Ascending aorta (tissue), 2 donors: ENCODE measurements at regions of chr4 and their contacts with region 1.

Region 1: DNA sequence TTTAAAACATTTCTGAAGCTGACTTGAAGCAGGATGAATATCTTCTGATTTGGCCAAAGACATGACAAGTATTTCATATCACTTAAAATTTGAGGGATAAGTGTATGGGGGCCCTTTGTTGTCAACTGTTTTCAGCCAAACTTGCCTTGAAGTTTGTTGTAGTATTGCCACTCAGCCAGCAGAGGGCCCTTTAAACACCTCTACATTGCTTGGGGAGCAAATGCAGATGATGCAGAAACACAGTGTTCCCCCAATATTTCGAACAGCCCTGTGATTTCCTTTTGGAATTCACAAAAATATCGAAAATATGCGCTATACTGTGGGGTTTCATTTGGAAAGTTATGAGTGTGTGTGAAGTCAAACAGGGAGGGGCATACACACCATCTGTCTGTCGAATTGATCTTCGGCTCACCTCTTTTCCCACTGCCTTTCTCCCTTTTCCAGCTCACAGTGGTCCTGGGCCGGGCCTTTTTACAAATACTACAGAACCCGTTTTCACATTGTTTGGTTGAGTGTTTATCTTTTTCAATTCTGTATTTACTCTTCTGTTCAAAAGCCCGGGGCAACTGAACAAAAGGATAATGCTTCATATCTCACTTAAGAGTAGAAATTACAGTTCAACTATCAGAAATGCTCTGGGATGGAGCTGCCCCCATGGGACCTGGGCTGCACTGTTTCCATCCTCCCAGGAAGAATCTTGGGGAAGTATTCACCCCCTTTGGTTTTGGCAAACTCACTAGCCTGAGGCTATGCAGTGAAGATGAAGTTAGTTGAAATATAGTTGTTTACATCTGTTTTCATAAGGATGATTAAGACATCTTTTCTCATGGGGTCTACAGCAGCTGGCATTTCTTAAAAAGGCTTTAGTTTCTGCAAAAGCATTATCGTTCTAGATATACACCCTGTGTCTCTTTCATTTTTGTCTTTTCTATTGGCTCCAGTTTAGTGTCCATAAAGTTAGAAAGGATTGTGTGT is 137.6 kb downstream of the EGF start:
- DNase-seq: no peak
- H3K4me3 ChIP-seq: no peak overlapping the region
- H3K27ac ChIP-seq: no peak overlapping the region
- H3K4me1 ChIP-seq: no peaks in the 10 kb centered on the region
- H3K27me3 ChIP-seq: no peaks in the 10 kb centered on the region
- CTCF ChIP-seq: peak; percentile 40 to 71 (median 63)

Region 2: GRCh38 chr4:110193822-110194761 is 143.9 kb after region 1 on chr4:
- intact Hi-C with region 1: loop called (anchors 5 kb)
- DNase-seq: peak; percentile 43 to 77
- H3K4me3 ChIP-seq: no peak overlapping the region
- H3K27ac ChIP-seq: no peak overlapping the region
- H3K4me1 ChIP-seq: no peaks in the 10 kb centered on the region
- H3K27me3 ChIP-seq: no peaks in the 10 kb centered on the region
- CTCF ChIP-seq: no peak

Region 3: DNA sequence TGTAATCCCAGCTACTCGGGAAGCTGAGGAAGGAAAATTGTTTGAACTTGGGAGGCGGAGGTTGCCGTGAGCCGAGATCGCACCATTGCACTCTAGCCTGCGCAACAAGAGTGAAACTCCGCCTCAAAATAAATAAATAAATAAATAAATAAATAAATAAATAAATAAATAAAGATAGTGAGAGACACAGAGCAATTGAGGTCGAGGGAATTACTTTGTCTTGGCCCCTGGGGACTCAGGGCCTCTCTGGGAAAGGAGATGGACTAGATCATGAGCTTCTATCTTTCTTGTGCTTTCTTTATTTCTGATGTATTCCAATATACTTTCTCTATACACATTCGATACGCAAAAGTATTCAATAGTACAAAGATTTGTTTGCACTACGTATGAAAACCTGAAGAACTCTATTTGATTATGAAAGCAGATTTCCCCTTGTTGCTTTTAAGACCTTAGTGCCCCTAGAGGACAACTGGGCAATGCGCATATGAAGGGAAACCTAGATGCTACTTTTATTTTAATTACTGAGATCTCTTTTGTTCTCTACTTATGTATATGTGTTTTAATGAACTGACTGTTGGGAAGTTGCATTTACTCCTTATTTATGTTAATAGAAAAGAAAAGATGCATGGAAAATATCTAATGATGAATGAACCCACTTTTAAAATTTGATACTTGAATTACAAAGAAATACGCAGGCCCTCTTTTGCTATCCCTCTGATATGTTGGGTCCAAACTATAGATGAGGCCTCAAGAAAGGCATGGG is 160.9 kb after region 1 on chr4:
- intact Hi-C with region 1: loop called (anchors 2 kb)
- DNase-seq: no peak
- H3K4me3 ChIP-seq: no peak overlapping the region
- H3K27ac ChIP-seq: no peak overlapping the region
- H3K4me1 ChIP-seq: no peaks in the 10 kb centered on the region
- H3K27me3 ChIP-seq: no peaks in the 10 kb centered on the region
- CTCF ChIP-seq: peak in 2 of 3 experiments; percentile 61 to 75

Region 4: GRCh38 chr4:110510955-110511544 is 460.8 kb after region 1 on chr4:
- intact Hi-C with region 1: loop called (anchors 5 kb)
- DNase-seq: no peak
- H3K4me3 ChIP-seq: no peak overlapping the region
- H3K27ac ChIP-seq: no peak overlapping the region
- H3K4me1 ChIP-seq: no peaks in the 10 kb centered on the region
- H3K27me3 ChIP-seq: no peaks in the 10 kb centered on the region
- CTCF ChIP-seq: peak; percentile 16 to 68 (median 63)